Posterior vena cava (tissue), 2 donors: ENCODE measurements at regions of chr2 and their contacts with region 1.

Region 1: GRCh38 chr2:26251893-26252292 is 7.2 kb downstream of the HADHB start:
- DNase-seq: no peak

Region 2: DNA sequence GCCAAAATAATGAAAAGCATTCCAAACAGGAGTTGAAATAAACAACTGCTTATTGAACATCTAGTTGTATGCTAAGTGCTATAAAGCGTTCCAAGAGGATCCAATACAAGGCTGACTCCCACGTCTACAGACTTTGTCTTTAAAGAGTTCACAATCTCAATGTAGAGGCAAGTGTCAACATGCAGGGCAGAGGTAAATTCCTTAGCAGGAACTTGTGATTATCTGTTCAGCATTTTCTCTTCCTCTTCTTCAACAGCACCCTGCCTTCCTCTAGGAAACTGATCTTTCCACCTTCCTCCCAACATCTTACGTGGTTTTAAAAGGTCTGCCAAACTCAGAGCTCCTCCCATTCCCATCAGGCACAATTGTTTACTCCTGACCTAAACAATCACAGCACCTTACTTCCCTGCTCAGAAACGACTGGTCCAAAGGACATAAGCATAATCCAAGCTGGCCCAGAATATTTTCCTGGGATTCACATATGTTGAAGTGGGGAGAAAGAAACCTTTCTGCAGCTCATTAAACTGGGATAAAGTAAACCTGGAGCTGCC is 1975.5 kb before region 1 on chr2:
- intact Hi-C with region 1: no loop called
- DNase-seq: no peak

Region 3: DNA sequence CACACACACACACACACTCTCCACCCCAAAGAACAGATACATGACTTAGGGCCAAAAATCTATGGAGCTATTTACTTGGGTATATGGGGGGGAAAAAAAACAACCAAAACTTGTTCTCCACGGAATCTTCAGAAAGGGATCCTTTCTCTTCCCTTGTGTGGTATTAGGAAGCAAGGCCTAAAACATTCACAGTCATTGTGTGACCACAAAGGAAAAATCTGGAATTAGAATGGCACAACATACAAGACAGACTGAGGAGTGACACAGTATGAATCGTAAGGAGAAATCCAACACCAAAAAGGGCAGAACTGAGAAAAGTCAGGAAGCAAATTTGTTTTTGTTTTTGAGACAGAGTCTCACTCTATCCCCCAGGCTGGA is 443.9 kb before region 1 on chr2:
- intact Hi-C with region 1: no loop called
- DNase-seq: no peak

Region 4: DNA sequence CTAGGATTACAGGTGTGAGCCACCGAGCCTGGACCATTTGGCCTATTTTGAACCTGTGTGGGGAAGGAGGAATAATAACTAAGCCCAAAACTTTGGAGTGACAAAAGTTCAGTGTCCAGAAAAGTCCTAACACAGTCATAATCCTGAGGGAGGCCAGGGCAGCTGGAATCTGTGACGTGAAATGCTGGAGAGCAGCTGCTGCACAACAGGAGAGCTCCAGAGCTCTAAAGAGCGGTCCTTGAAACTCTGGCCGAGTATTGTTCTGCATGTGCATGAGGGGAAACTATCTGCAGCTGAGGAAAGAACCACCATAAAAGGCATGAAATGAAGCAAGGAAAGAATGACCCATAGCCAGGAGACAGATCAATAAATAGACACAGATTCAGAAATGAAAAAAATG is 35.3 kb before region 1 on chr2:
- intact Hi-C with region 1: no loop called
- DNase-seq: no peak

Region 5: DNA sequence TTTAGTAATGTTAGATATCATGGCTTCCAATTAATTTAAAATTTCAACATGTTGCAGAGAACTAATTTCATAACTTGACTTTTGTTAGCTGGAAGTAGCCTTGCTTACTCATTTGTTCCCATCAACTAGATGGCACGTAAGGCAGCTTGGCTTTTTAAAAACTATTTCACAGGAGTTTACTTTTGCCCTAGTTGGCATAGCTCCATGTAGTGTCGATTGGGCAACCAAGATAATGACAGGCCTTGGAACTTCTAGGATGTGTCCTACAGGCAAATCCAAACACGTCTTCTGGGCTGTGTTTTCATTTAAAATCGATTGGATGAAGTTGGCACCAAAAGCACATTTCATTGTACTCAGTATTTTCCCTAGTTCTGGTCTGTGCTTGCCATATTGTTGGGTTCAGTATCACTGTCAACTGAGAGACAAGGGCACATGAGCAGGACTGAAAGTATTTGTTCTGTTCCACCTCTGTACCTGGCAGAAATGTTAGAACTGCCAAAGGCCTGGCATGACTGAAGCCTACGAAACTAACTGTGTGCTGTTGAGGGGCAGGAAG is 22.2 kb after region 1 on chr2:
- intact Hi-C with region 1: no loop called
- DNase-seq: no peak

Region 6: GRCh38 chr2:26345545-26346453 is 93.9 kb after region 1 on chr2 and contains the start of gene SELENOI:
- intact Hi-C with region 1: loop called in 1 of 2 experiments (anchors 5 kb)
- DNase-seq: peak; percentile 100
- total RNA-seq, gene SELENOI: 12.2 to 14.6 TPM